Naive thymus-derived CD4-positive, alpha-beta T cell (primary cell): ENCODE measurements at regions of chr9 and their contacts with region 1.

Region 1: DNA sequence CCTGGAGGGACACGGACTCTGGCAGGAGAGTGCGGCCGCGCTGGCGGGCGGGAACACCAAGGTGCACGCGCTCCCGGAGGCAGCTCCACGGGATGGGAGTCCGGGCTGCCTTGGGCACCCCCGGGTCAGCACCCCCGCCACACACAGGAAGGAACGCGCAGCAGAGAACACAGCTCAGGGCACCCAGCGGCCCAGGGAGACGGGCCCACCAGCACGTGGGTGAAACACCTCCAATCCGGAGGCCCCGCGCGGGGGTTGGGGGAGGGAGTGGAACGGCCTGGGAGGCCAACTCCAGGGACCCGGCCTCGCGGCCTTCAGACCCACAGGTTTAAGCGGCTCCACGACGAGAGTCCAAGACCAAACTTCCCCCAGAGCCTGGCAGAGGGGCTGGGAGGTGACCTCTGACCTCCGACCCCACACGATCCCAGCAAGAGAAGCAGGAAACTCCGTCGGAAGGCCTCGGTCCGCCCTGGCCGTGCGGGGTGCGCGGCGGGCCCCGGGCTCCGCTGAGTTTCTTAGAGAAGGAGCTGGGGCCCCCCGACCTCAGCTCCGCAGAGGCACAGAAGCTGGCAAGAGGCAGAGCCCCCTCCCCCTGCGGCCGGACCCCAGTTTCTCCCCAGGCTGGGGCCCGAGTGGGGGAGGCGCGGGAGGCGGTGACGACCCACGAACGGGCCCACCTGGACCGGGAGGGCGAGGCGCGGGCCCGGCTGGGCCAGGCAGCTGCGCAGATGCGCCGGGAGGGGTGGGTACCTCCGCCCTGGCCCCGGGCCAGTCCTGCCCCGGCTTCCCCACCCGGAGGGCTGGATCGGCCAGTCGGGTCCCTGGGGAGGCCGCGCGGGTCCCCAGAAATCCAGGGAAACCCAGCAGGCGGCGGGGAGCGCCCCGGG is 851 bp downstream of the NACC2 start:
- DNase-seq: peak in 8 of 9 donors; percentile 43 to 59 (median 48)
- ATAC-seq: peak; percentile 80
- H3K4me3 ChIP-seq: peak overlapping the region; percentile 29
- H3K4me3 Mint-ChIP-seq: peak overlapping the region; percentile 47 to 85 (median 70)
- H3K27ac ChIP-seq: peak overlapping the region; percentile 64
- H3K27ac Mint-ChIP-seq: peak overlapping the region in 7 of 9 donors; percentile 17 to 73 (median 34)
- H3K4me1 ChIP-seq: peaks cover 13 to 21% of the 10 kb centered on the region in 2 donors
- H3K4me1 Mint-ChIP-seq: peaks cover 11 to 41% (median 26%) of the 10 kb centered on the region in 7 donors
- H3K27me3 ChIP-seq: no peaks in the 10 kb centered on the region
- H3K27me3 Mint-ChIP-seq: peaks cover 0 to 33% (median 0%) of the 10 kb centered on the region in 5 donors

Region 2: DNA sequence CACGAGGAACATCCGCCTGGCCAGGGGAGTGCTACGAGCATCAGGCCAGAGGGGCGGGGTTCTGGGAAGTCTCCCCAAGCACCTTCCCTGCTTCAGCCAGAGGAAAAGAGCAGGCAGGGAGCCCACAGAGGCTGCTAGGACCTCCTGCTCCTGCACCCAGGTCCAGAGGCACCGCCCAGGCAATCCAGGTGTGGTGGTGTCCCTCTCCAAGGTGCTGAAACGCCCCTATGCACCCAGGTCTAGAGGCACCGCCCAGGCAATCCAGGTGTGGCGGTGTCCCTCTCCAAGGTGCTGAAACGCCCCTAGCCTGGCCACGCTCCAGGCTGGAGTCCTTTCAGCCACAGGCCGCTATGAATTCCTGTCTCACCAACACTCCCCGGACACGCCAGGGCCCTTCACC is 122.3 kb before region 1 on chr9:
- CTCF ChIA-PET with region 1: interaction called, 3 read pairs
- POLR2A ChIA-PET with region 1: no interaction called
- intact Hi-C with region 1: loop called in 1 of 2 experiments (anchors 1 kb)
- DNase-seq: peak in 8 of 9 donors; percentile 34 to 61 (median 56)
- ATAC-seq: peak; percentile 60
- H3K4me3 ChIP-seq: no peak overlapping the region
- H3K4me3 Mint-ChIP-seq: no peak overlapping the region
- H3K27ac ChIP-seq: no peak overlapping the region
- H3K27ac Mint-ChIP-seq: peak overlapping the region in 1 of 9 donors; percentile 37
- H3K4me1 ChIP-seq: peaks cover 4 to 8% of the 10 kb centered on the region in 2 donors
- H3K4me1 Mint-ChIP-seq: peaks cover 6 to 14% (median 8%) of the 10 kb centered on the region in 7 donors
- H3K27me3 ChIP-seq: no peaks in the 10 kb centered on the region
- H3K27me3 Mint-ChIP-seq: peaks cover 0 to 6% (median 3%) of the 10 kb centered on the region in 5 donors

Region 3: GRCh38 chr9:136109351-136110081 is 15.3 kb after region 1 on chr9:
- CTCF ChIA-PET with region 1: interaction called, 13 read pairs
- POLR2A ChIA-PET with region 1: interaction called, 38 read pairs
- intact Hi-C with region 1: loop called (anchors 1 kb)
- DNase-seq: peak; percentile 80 to 93 (median 89)
- ATAC-seq: peak; percentile 96
- H3K4me3 ChIP-seq: peak overlapping the region; percentile 69
- H3K4me3 Mint-ChIP-seq: peak overlapping the region; percentile 78 to 91 (median 88)
- H3K27ac ChIP-seq: peak overlapping the region; percentile 82
- H3K27ac Mint-ChIP-seq: peak overlapping the region; percentile 64 to 93 (median 91)
- H3K4me1 ChIP-seq: peaks cover 60 to 75% of the 10 kb centered on the region in 2 donors
- H3K4me1 Mint-ChIP-seq: peaks cover 42 to 82% (median 64%) of the 10 kb centered on the region in 7 donors
- H3K27me3 ChIP-seq: no peaks in the 10 kb centered on the region
- H3K27me3 Mint-ChIP-seq: no peaks in the 10 kb centered on the region

Region 4: GRCh38 chr9:136118320-136119060 is 24.3 kb after region 1 on chr9 and contains the start of gene TMEM250:
- CTCF ChIA-PET with region 1: interaction called, 22 read pairs
- POLR2A ChIA-PET with region 1: interaction called, 18 read pairs
- intact Hi-C with region 1: loop called (anchors 1 kb)
- DNase-seq: peak; percentile 94 to 98 (median 97)
- ATAC-seq: peak; percentile 94
- H3K4me3 ChIP-seq: peak within 1 kb of the TSS; percentile 81
- H3K4me3 Mint-ChIP-seq: peak within 1 kb of the TSS; percentile 73 to 87 (median 84)
- H3K27ac ChIP-seq: peak within 1 kb of the TSS; percentile 87
- H3K27ac Mint-ChIP-seq: peak within 1 kb of the TSS; percentile 13 to 91 (median 84)
- H3K4me1 ChIP-seq: peaks cover 14 to 33% of the 10 kb centered on the region in 2 donors
- H3K4me1 Mint-ChIP-seq: peaks cover 3 to 26% (median 11%) of the 10 kb centered on the region in 7 donors
- H3K27me3 ChIP-seq: no peaks in the 10 kb centered on the region
- H3K27me3 Mint-ChIP-seq: no peaks in the 10 kb centered on the region
- total RNA-seq, gene TMEM250: 16.4 to 55.3 (median 41.3) TPM

Region 5: GRCh38 chr9:136138566-136138965 is 44.3 kb after region 1 on chr9:
- CTCF ChIA-PET with region 1: interaction called, 3 read pairs
- POLR2A ChIA-PET with region 1: no interaction called
- intact Hi-C with region 1: loop called in 1 of 2 experiments (anchors 1 kb)
- DNase-seq: peak in 3 of 9 donors; percentile 23 to 27 (median 25)
- ATAC-seq: no peak
- H3K4me3 ChIP-seq: no peak overlapping the region
- H3K4me3 Mint-ChIP-seq: no peak overlapping the region
- H3K27ac ChIP-seq: no peak overlapping the region
- H3K27ac Mint-ChIP-seq: no peak overlapping the region
- H3K4me1 ChIP-seq: peaks cover 0 to 1% of the 10 kb centered on the region in 2 donors
- H3K4me1 Mint-ChIP-seq: peaks cover 0 to 8% (median 6%) of the 10 kb centered on the region in 7 donors
- H3K27me3 ChIP-seq: peaks cover 0 to 3% of the 10 kb centered on the region in 2 donors
- H3K27me3 Mint-ChIP-seq: peaks cover 8 to 30% (median 14%) of the 10 kb centered on the region in 5 donors

Region 6: GRCh38 chr9:137095664-137096517 is 1001.7 kb after region 1 on chr9:
- CTCF ChIA-PET with region 1: no interaction called
- POLR2A ChIA-PET with region 1: no interaction called
- intact Hi-C with region 1: no loop called
- DNase-seq: peak; percentile 63 to 92 (median 89)
- ATAC-seq: peak; percentile 100
- H3K4me3 ChIP-seq: peak overlapping the region; percentile 63
- H3K4me3 Mint-ChIP-seq: peak overlapping the region; percentile 76 to 94 (median 86)
- H3K27ac ChIP-seq: peak overlapping the region; percentile 79
- H3K27ac Mint-ChIP-seq: peak overlapping the region; percentile 87 to 98 (median 95)
- H3K4me1 ChIP-seq: peaks cover 12 to 14% of the 10 kb centered on the region in 2 donors
- H3K4me1 Mint-ChIP-seq: peaks cover 9 to 28% (median 21%) of the 10 kb centered on the region in 7 donors
- H3K27me3 ChIP-seq: no peaks in the 10 kb centered on the region
- H3K27me3 Mint-ChIP-seq: no peaks in the 10 kb centered on the region